ENCODE measurements at regions of chr3 and their contacts with region 1.

Region 1: DNA sequence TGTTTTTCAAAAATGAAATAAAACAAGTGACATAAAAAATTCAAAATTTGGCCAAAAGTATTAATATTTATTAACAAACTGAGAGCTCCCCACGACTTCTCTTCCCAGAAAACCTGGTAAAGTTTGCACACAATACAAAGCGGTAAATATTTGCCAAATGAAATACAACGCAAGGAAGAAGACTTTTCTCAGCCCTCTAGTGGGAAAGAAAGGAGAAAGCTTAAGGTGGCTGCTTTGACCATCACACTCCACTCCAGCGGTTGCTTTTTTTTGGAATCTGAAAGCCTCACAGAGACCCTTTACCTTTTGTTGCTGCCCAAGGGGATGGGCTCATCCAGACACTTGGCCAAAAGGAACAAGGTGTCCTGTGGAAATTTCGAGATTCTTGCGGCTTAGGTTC is 1.1 kb upstream of the GK5 start:
- DNase-seq: no peak

Region 2: DNA sequence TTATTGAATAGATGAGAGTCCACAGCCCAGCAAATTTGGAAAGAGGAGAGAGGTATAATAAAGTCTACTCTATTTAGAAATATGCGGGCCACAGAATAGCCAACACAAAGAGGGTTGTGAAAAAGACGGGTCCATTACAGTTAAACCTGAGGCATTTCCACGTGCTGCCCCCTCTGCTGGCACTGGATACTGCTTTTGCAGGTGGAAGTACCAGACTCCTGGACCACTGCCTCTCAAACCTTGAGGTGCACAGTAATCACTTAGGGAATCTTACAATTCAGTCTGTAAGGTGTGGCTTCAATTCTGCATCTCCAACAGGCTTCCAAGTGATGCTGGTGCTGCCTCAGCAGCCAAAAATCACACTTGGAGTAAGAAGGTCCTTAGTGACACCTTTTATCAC is 74.1 kb before region 1 on chr3:
- intact Hi-C with region 1: loop called (anchors 10 kb)
- DNase-seq: no peak

Region 3: GRCh38 chr3:142680710-142681109 is 454.2 kb after region 1 on chr3:
- intact Hi-C with region 1: no loop called
- DNase-seq: no peak